Transverse colon (tissue), 4 donors: ENCODE measurements at regions of chr17 and their contacts with region 1.

Region 1: DNA sequence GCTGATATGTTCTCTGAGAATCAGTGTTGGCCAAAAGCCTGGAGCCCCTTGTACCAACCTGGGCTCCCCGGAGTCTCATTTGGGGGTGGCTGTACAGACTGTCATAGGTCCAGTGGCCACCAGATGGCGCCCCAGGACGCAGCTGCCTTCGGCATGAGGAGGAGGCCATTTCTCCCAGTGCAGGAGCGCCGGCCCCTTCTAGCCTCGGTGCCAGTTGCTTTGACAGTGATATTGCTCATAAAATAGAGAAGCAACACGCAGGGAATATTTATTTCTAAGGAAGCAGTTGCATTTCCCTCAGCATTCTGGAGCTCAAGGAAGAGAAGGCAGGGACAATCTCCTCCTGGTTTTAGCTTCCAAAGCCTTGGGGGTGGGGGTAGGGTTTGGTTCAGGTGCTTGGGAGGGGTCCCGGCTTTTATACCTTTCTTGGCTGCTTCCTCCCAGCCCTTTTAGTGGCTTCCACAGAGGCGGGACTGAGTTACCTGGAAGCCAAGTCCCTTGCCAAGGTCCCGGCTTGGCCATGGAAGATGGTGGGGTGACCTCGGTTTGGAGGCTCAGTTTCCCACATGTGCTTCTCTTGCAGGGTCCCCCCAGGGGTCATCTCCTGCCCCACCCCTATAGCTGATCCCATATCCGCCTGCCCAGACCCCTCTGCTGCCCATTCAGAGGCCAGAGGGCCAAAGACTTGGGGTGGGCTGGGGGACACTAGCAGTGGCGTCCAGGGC is 117.8 kb upstream of the CDC42EP4 start:
- DNase-seq: peak; percentile 88
- H3K4me3 ChIP-seq: no peak overlapping the region
- H3K27ac ChIP-seq: no peak overlapping the region
- H3K4me1 ChIP-seq: peaks cover 0 to 12% (median 6%) of the 10 kb centered on the region in 4 donors
- H3K27me3 ChIP-seq: no peaks in the 10 kb centered on the region
- CTCF ChIP-seq: peak; percentile 94 to 97 (median 95)
- EP300 ChIP-seq: no peak
- POLR2A ChIP-seq: no peak

Region 2: GRCh38 chr17:73446617-73447016 is 17.0 kb after region 1 on chr17:
- in situ Hi-C with region 1: no loop called
- intact Hi-C with region 1: no loop called
- DNase-seq: no peak
- H3K4me3 ChIP-seq: no peak overlapping the region
- H3K27ac ChIP-seq: no peak overlapping the region
- H3K4me1 ChIP-seq: no peaks in the 10 kb centered on the region
- H3K27me3 ChIP-seq: no peaks in the 10 kb centered on the region
- CTCF ChIP-seq: no peak
- EP300 ChIP-seq: no peak
- POLR2A ChIP-seq: no peak

Region 3: GRCh38 chr17:73480740-73481139 is 51.1 kb after region 1 on chr17:
- in situ Hi-C with region 1: no loop called
- intact Hi-C with region 1: no loop called
- DNase-seq: no peak
- H3K4me3 ChIP-seq: no peak overlapping the region
- H3K27ac ChIP-seq: no peak overlapping the region
- H3K4me1 ChIP-seq: no peaks in the 10 kb centered on the region
- H3K27me3 ChIP-seq: no peaks in the 10 kb centered on the region
- CTCF ChIP-seq: no peak
- EP300 ChIP-seq: no peak
- POLR2A ChIP-seq: no peak

Region 4: GRCh38 chr17:73710095-73710592 is 280.5 kb after region 1 on chr17:
- in situ Hi-C with region 1: loop called in 3 of 4 experiments (anchors 10 kb)
- intact Hi-C with region 1: no loop called
- DNase-seq: peak; percentile 79
- H3K4me3 ChIP-seq: no peak overlapping the region
- H3K27ac ChIP-seq: no peak overlapping the region
- H3K4me1 ChIP-seq: peaks cover 0 to 3% (median 2%) of the 10 kb centered on the region in 4 donors
- H3K27me3 ChIP-seq: peaks cover 22% of the 10 kb centered on the region
- CTCF ChIP-seq: peak; percentile 59 to 89 (median 83)
- EP300 ChIP-seq: no peak
- POLR2A ChIP-seq: no peak

Region 5: GRCh38 chr17:73998653-73999645 is 569.3 kb after region 1 on chr17:
- in situ Hi-C with region 1: loop called in 1 of 4 experiments (anchors 25 kb)
- intact Hi-C with region 1: no loop called
- DNase-seq: peak; percentile 78
- H3K4me3 ChIP-seq: no peak overlapping the region
- H3K27ac ChIP-seq: no peak overlapping the region
- H3K4me1 ChIP-seq: peaks cover 0 to 10% (median 4%) of the 10 kb centered on the region in 4 donors
- H3K27me3 ChIP-seq: peaks cover 19% of the 10 kb centered on the region
- CTCF ChIP-seq: peak; percentile 62 to 82 (median 81)
- EP300 ChIP-seq: no peak
- POLR2A ChIP-seq: no peak

Region 6: GRCh38 chr17:74152591-74153455 is 723.2 kb after region 1 on chr17:
- in situ Hi-C with region 1: loop called in 1 of 4 experiments (anchors 25 kb)
- intact Hi-C with region 1: no loop called
- DNase-seq: no peak
- H3K4me3 ChIP-seq: no peak overlapping the region
- H3K27ac ChIP-seq: no peak overlapping the region
- H3K4me1 ChIP-seq: no peaks in the 10 kb centered on the region
- H3K27me3 ChIP-seq: peaks cover 11% of the 10 kb centered on the region
- CTCF ChIP-seq: no peak
- EP300 ChIP-seq: no peak
- POLR2A ChIP-seq: no peak

Region 7: GRCh38 chr17:74176546-74177001 is 747.0 kb after region 1 on chr17:
- in situ Hi-C with region 1: loop called in 3 of 4 experiments (anchors 10 to 25 kb)
- intact Hi-C with region 1: loop called (anchors 2 kb)
- DNase-seq: peak; percentile 68
- H3K4me3 ChIP-seq: no peak overlapping the region
- H3K27ac ChIP-seq: no peak overlapping the region
- H3K4me1 ChIP-seq: no peaks in the 10 kb centered on the region
- H3K27me3 ChIP-seq: peaks cover 39% of the 10 kb centered on the region
- CTCF ChIP-seq: peak; percentile 72 to 85 (median 84)
- EP300 ChIP-seq: no peak
- POLR2A ChIP-seq: no peak